Dendritic cell treated with granulocyte-macrophage colony-stimulating factor and Interleukin-4, amounts not matched to agents 40 ng/mL and 50 ng/mL, for 4 days (primary cell): ENCODE measurements at regions of chr7 and their contacts with region 1.

Region 1: GRCh38 chr7:129218514-129219062 is 6.2 kb upstream of the AHCYL2 start:
- H3K4me3 Mint-ChIP-seq: no peak overlapping the region
- H3K27ac Mint-ChIP-seq: no peak overlapping the region
- H3K4me1 Mint-ChIP-seq: peaks cover 24% of the 10 kb centered on the region
- H3K27me3 Mint-ChIP-seq: peaks cover 11% of the 10 kb centered on the region

Region 2: DNA sequence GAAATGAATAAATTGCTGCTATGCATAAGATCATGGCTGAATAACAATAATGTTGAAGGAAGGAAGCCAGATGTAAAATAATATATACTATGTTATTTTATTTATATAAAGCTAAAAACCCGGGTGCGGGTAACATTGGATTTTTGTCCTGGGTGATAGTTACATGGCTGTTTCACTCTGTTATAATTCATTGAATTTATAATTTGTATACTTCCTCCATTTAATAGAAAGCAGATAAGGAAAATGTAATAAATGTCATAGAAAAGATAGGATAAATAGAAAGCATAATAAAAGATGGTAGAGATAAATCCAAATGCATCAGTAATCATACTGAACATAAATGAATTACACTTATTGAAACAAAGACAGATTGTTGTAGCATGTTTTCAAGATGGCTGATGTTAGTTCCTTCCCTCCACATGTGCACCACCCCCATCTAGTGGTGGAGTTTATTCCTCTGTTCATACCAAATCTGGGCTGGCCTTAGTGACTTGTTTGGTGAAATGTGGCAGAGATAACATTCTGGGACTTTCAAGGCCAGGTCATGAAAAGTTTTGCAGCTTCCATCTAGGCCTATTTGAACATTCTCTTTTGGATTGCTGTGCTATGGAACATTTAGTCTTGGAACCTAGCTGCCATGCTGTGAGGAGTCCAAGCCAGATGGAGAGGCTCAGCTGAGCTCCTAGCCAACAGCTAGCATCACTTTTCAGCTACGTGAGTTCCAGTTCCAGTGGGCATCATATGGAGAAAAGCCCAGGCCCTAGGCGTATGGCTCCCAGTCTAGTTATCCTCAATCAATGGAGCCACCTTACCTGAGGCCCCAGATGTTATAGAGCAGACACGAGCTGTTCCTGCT is 53.1 kb after region 1 on chr7:
- intact Hi-C with region 1: loop called (anchors 1 kb)
- H3K4me3 Mint-ChIP-seq: no peak overlapping the region
- H3K27ac Mint-ChIP-seq: no peak overlapping the region
- H3K4me1 Mint-ChIP-seq: peaks cover 18% of the 10 kb centered on the region
- H3K27me3 Mint-ChIP-seq: no peaks in the 10 kb centered on the region

Region 3: GRCh38 chr7:129298268-129298893 is 79.8 kb after region 1 on chr7:
- intact Hi-C with region 1: loop called (anchors 2 kb)
- H3K4me3 Mint-ChIP-seq: no peak overlapping the region
- H3K27ac Mint-ChIP-seq: no peak overlapping the region
- H3K4me1 Mint-ChIP-seq: peaks cover 8% of the 10 kb centered on the region
- H3K27me3 Mint-ChIP-seq: no peaks in the 10 kb centered on the region